Adrenal gland (tissue), 19 donors: ENCODE measurements at regions of chr2 and their contacts with region 1.

Region 1: GRCh38 chr2:69012310-69013141 is 453 bp upstream of the ANTXR1 start:
- DNase-seq: peak; percentile 67 to 86 (median 75)
- H3K4me3 ChIP-seq: peak overlapping the region in 3 of 4 donors; percentile 69 to 84 (median 71)
- H3K27ac ChIP-seq: peak overlapping the region in 2 of 5 donors; percentile 85 to 87
- H3K4me1 ChIP-seq: peaks cover 0 to 40% of the 10 kb centered on the region in 2 donors
- H3K27me3 ChIP-seq: no peaks in the 10 kb centered on the region
- CTCF ChIP-seq: peak; percentile 70 to 88 (median 78)
- POLR2A ChIP-seq: no peak

Region 2: DNA sequence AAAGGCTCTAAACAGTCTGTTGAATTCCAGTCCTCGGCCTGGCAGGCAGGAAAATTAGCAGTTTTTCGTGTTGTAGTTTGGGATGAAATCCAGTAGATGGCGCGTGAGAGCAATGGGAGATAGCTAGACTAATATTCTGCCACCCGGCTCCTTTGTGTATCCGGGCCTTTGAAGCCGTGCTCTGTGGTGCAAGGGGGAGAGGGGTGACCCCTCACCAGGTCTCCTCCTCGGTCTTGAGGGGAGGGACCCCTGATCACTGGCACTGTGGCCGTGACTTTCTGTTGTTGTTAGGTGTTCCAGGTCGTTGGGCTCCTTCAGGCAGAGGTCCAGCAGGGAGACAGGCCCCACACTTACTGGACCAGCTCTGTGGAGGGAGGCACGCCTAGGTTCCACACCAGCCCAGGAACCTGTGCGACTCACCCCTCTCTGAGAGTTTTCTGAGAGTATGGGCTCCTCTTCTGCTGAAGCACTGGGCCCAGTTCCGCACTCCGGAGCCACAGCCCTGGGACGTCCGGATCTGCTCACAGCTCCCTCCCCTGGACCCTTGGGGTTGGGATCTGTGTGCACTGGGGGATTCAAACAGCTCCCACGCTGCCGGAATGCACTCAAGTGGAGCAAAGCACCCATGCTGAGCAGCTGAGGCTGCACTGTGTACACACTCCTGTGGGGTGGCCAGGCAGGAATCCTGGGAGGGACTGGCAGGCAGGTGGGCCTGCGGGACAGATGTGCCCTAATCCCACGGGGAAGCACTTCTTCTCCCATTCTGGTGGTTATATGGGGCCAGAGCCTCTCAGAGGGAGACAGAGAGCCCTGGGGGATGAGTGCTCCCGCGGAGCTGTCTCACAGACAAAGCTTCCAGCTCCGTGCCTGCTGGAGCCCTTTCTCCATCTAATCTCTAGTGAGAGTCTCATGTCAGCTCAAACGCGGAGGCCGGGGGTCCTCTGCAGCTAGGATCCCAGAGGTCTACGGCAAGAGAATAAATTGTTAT is 68.7 kb before region 1 on chr2:
- intact Hi-C with region 1: loop called in 1 of 2 experiments (anchors 10 kb)
- DNase-seq: peak; percentile 56 to 83 (median 66)
- H3K4me3 ChIP-seq: no peak overlapping the region
- H3K27ac ChIP-seq: no peak overlapping the region
- H3K4me1 ChIP-seq: no peaks in the 10 kb centered on the region
- H3K27me3 ChIP-seq: no peaks in the 10 kb centered on the region
- CTCF ChIP-seq: peak; percentile 77 to 90 (median 84)
- POLR2A ChIP-seq: no peak